B cell (primary cell): ENCODE measurements at regions of chr11 and their contacts with region 1.

Region 1: DNA sequence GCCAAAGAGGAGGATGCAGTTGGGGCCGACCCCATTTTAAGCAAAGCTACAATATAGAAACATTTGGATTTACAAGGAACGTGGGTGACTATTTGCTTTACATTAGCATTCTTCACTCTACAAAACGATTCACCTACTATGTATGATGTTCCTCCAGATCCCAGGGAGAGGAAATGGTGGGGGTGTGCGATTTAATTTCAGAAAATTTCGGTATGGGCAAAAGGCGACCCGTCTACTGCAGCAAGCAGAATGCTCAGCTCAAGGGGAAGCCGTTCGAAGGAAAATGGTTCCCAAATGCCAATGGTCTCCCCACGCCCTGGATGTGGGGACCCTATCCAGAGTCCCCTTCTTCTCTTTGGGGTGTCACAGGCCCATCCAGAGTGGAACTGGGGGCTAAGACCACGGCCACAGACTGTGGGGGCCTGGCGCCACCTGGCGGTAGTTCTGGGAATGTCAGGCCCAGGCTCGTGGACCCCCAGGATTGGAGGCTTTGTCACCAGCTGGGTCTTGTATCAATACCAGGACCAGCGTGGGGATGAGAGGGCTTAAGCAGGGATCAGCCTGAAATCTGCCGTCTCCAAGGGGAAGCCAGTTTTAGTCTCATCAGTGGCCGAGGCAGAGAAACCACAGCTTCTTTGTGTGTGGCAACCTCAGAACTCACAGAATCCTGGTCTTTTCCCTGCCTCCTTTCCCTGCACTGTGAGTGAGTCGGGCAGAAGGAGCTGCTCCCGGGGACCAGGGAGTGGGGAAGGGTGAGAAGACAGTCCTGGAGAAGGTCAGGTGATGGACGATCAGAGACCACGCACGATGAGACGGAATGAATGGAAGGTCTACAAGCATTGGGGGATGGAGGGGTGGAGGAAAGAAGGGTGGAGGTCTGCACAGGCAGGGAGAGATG is 8.4 kb downstream of the LRRC10B start:
- DNase-seq: peak; percentile 72
- ATAC-seq: peak; percentile 64
- H3K4me3 ChIP-seq: peak overlapping the region in 1 of 5 experiments; percentile 22
- H3K4me3 Mint-ChIP-seq: peak overlapping the region; percentile 24
- H3K27ac ChIP-seq: no peak overlapping the region
- H3K27ac Mint-ChIP-seq: no peak overlapping the region
- H3K4me1 ChIP-seq: peaks cover 11 to 14% of the 10 kb centered on the region in 2 donors
- H3K4me1 Mint-ChIP-seq: peaks cover 9% of the 10 kb centered on the region
- H3K27me3 ChIP-seq: peaks cover 0 to 40% (median 9%) of the 10 kb centered on the region in 4 experiments
- H3K27me3 Mint-ChIP-seq: peaks cover 44% of the 10 kb centered on the region
- CTCF ChIP-seq: peak; percentile 95

Region 2: DNA sequence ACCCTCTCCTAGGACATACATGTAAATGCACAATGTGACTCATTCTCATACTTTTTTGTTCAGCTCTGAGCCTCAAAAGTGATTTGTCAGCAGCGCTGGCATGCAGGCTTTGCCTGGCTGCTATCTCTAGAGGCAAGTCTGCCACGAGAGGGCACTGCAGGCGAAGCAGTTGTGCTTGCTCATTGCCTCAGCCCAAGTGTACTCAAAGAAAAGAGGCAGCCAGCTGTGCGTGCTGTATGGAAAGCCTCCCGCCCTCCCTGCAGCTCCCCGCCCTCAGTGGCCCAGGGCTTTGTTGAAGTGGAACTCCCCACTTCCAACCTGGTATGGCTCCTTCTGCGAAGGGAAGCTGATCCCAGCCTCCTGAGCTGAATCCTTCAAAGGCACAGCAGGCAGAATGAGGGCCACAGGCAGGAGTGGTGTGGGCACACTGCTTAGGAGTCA is 70.7 kb before region 1 on chr11:
- CTCF ChIA-PET with region 1: interaction called, 13 read pairs
- POLR2A ChIA-PET with region 1: no interaction called
- intact Hi-C with region 1: no loop called
- DNase-seq: peak; percentile 64
- ATAC-seq: peak; percentile 60
- H3K4me3 ChIP-seq: no peak overlapping the region
- H3K4me3 Mint-ChIP-seq: no peak overlapping the region
- H3K27ac ChIP-seq: no peak overlapping the region
- H3K27ac Mint-ChIP-seq: no peak overlapping the region
- H3K4me1 ChIP-seq: no peaks in the 10 kb centered on the region
- H3K4me1 Mint-ChIP-seq: peaks cover 3% of the 10 kb centered on the region
- H3K27me3 ChIP-seq: no peaks in the 10 kb centered on the region
- H3K27me3 Mint-ChIP-seq: no peaks in the 10 kb centered on the region
- CTCF ChIP-seq: peak; percentile 66

Region 3: GRCh38 chr11:61477727-61478148 is 39.2 kb before region 1 on chr11:
- CTCF ChIA-PET with region 1: interaction called, 62 read pairs
- POLR2A ChIA-PET with region 1: no interaction called
- intact Hi-C with region 1: loop called (anchors 1 kb)
- DNase-seq: peak; percentile 69
- ATAC-seq: peak; percentile 62
- H3K4me3 ChIP-seq: no peak overlapping the region
- H3K4me3 Mint-ChIP-seq: no peak overlapping the region
- H3K27ac ChIP-seq: no peak overlapping the region
- H3K27ac Mint-ChIP-seq: no peak overlapping the region
- H3K4me1 ChIP-seq: peaks cover 0 to 6% of the 10 kb centered on the region in 2 donors
- H3K4me1 Mint-ChIP-seq: peaks cover 2% of the 10 kb centered on the region
- H3K27me3 ChIP-seq: peaks cover 0 to 15% (median 0%) of the 10 kb centered on the region in 4 experiments
- H3K27me3 Mint-ChIP-seq: peaks cover 7% of the 10 kb centered on the region
- CTCF ChIP-seq: peak; percentile 95

Region 4: DNA sequence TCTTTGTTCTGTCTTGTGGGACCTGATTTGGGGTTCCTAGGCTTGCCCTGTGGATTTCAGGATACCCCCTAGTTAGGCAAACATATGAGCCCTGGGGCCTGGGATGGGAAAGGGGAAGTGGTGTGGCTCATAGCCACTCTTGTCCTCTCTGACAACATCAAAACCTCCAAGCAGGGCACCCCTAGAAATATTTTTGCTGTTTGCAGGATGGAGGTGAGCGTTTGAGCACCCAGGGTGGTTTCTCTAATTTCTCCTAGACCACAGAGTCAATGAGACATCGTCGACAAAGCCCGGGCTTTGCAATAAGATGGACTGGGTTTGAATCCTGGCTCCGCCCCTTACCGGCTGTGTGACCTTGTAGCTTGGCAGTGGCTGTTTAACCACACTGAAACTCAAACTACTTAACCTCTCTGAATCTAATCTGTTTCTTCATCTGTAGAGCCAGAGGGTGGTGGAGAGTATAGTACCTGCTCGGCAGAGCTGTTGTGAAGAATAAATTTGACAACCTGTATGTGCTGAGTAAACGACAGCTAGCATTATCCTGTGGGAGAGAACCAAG is 13.6 kb before region 1 on chr11:
- CTCF ChIA-PET with region 1: interaction called, 13 read pairs
- POLR2A ChIA-PET with region 1: no interaction called
- intact Hi-C with region 1: no loop called
- DNase-seq: no peak
- ATAC-seq: no peak
- H3K4me3 ChIP-seq: no peak overlapping the region
- H3K4me3 Mint-ChIP-seq: no peak overlapping the region
- H3K27ac ChIP-seq: no peak overlapping the region
- H3K27ac Mint-ChIP-seq: no peak overlapping the region
- H3K4me1 ChIP-seq: peaks cover 6% of the 10 kb centered on the region in 2 donors
- H3K4me1 Mint-ChIP-seq: peaks cover 6% of the 10 kb centered on the region
- H3K27me3 ChIP-seq: peaks cover 0 to 24% (median 7%) of the 10 kb centered on the region in 4 experiments
- H3K27me3 Mint-ChIP-seq: peaks cover 18% of the 10 kb centered on the region
- CTCF ChIP-seq: no peak

Region 5: DNA sequence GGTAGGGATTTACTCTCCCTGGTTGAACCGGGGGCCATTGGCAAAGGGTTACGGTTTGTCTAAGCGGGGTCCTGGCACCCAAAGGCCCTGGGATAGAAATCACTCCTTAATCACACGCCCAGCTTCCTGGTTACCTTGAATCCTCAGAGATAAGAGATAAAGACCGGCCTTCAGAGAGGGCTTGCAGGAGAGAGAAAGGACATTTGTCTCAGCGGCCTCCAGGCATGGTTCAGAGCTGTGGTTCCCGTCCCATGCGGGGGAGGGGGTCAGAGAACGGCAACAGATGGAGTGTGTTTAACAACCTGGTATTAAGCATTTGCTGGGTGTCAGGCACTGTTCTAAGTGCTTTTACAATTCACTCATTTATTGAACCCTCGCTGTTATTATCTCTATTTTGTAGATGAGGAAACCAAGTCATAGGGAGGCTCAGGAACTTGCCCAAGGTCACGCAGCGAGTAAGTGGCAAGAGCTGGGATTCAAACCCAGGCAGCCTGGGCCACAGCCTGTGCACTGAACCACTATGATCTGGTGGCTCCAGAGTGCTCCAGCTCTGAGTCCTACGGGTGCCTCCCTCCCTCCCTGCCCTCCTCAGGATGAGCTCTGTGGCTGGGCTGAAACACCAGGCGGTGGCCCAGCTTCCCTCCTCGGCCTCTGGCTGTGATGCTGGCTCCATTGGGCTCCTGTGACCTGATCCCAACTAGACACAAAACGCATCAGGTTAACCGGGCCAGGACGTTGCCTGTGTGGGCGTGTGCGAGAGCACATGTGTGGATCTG is 10.2 kb after region 1 on chr11:
- CTCF ChIA-PET with region 1: interaction called, 11 read pairs
- POLR2A ChIA-PET with region 1: no interaction called
- intact Hi-C with region 1: no loop called
- DNase-seq: no peak
- ATAC-seq: no peak
- H3K4me3 ChIP-seq: no peak overlapping the region
- H3K4me3 Mint-ChIP-seq: no peak overlapping the region
- H3K27ac ChIP-seq: no peak overlapping the region
- H3K27ac Mint-ChIP-seq: no peak overlapping the region
- H3K4me1 ChIP-seq: no peaks in the 10 kb centered on the region
- H3K4me1 Mint-ChIP-seq: no peaks in the 10 kb centered on the region
- H3K27me3 ChIP-seq: peaks cover 0 to 9% (median under 1%) of the 10 kb centered on the region in 4 experiments
- H3K27me3 Mint-ChIP-seq: peaks cover 32% of the 10 kb centered on the region
- CTCF ChIP-seq: no peak

Region 6: GRCh38 chr11:61532139-61533038 is 15.5 kb after region 1 on chr11:
- CTCF ChIA-PET with region 1: interaction called, 11 read pairs
- POLR2A ChIA-PET with region 1: no interaction called
- intact Hi-C with region 1: no loop called
- DNase-seq: peak; percentile 51
- ATAC-seq: no peak
- H3K4me3 ChIP-seq: no peak overlapping the region
- H3K4me3 Mint-ChIP-seq: no peak overlapping the region
- H3K27ac ChIP-seq: no peak overlapping the region
- H3K27ac Mint-ChIP-seq: no peak overlapping the region
- H3K4me1 ChIP-seq: no peaks in the 10 kb centered on the region
- H3K4me1 Mint-ChIP-seq: no peaks in the 10 kb centered on the region
- H3K27me3 ChIP-seq: peaks cover 0 to 16% (median 0%) of the 10 kb centered on the region in 4 experiments
- H3K27me3 Mint-ChIP-seq: peaks cover 33% of the 10 kb centered on the region
- CTCF ChIP-seq: peak; percentile 79

Region 7: DNA sequence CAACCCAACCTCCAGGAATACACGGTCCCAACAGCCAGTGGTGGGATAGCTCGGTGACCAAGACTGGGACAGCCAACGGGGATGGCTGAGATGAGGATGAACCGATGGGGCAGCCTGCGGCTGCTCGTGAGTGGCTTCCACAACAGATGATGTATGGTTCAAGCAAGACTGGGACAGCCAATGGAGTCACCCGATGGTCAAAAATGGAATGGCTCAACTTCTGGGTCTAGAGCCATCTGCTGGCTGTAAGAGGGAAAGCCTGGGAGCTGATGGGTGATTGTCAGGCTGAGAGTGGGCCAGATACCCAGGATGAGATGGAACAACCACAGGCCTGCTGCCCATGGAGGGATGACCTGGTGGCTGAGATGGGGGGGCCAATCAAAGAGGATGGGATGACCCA is 28.4 kb after region 1 on chr11:
- CTCF ChIA-PET with region 1: interaction called, 12 read pairs
- POLR2A ChIA-PET with region 1: no interaction called
- intact Hi-C with region 1: no loop called
- DNase-seq: no peak
- ATAC-seq: no peak
- H3K4me3 ChIP-seq: no peak overlapping the region
- H3K4me3 Mint-ChIP-seq: no peak overlapping the region
- H3K27ac ChIP-seq: no peak overlapping the region
- H3K27ac Mint-ChIP-seq: no peak overlapping the region
- H3K4me1 ChIP-seq: no peaks in the 10 kb centered on the region
- H3K4me1 Mint-ChIP-seq: peaks cover 2% of the 10 kb centered on the region
- H3K27me3 ChIP-seq: peaks cover 0 to 21% (median 3%) of the 10 kb centered on the region in 4 experiments
- H3K27me3 Mint-ChIP-seq: peaks cover 14% of the 10 kb centered on the region
- CTCF ChIP-seq: no peak

Region 8: GRCh38 chr11:61947486-61948210 is 430.7 kb after region 1 on chr11:
- CTCF ChIA-PET with region 1: no interaction called
- POLR2A ChIA-PET with region 1: no interaction called
- intact Hi-C with region 1: no loop called
- DNase-seq: peak; percentile 82
- ATAC-seq: peak; percentile 90
- H3K4me3 ChIP-seq: no peak overlapping the region
- H3K4me3 Mint-ChIP-seq: no peak overlapping the region
- H3K27ac ChIP-seq: no peak overlapping the region
- H3K27ac Mint-ChIP-seq: peak overlapping the region; percentile 3
- H3K4me1 ChIP-seq: peaks cover 7 to 9% of the 10 kb centered on the region in 2 donors
- H3K4me1 Mint-ChIP-seq: peaks cover 8% of the 10 kb centered on the region
- H3K27me3 ChIP-seq: no peaks in the 10 kb centered on the region
- H3K27me3 Mint-ChIP-seq: peaks cover 4% of the 10 kb centered on the region
- CTCF ChIP-seq: peak; percentile 90